K562 (cell line): ENCODE measurements at regions of chr12 and their contacts with region 1.

Region 1: DNA sequence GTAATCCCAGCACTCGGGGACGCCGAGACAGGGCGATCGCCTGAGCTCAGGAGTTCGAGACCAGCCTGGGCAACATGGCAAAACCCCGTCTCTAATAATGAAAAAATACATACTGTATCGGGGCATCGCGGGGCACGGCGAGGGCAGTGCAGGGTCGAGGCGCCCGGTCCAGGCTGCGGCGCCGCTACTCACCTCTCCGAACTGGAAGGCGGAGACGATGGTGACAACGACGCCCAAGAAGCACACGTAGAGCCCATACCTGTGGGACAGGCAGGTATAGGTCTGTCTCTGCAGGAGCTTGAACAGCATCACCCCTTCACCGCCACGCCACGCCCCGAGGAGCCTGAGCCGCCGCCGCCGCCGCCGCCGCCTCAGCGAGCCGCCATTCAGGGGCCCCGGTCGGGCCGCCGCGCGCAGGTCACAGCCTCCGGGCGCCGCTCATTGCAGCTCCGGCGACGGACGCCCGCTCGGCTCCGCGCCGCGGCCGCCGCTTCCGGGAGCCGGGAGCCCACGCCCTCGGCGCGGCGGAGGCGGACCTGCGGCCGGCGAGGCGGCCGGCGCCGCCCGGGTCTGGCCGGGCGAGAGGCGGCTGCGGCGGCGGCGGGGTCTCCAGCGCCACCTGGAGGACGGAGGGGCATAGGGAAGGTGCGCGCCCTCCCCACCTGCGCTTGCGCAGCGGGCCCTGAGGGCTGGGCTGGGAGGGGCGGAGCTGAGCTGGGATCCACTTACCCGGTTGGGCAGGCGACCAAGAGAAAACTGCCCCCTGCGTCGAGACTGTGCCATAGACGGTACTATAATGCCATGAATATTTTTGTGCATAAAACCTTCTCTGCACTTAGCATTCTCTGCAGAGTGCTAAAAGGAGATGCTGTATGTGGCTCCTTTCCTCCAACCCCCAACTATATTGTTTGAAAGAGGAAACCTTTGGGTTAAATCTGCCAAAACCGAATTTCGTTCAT is at the start of gene GNPTAB:
- DNase-seq: peak; percentile 96 to 99 (median 98)
- ATAC-seq: peak; percentile 94
- H3K4me3 ChIP-seq: peak within 1 kb of the TSS; percentile 89
- H3K27ac ChIP-seq: peak within 1 kb of the TSS; percentile 77
- H3K4me1 ChIP-seq: peaks cover 13 to 33% of the 10 kb centered on the region in 2 experiments
- H3K27me3 ChIP-seq: no peaks in the 10 kb centered on the region
- CTCF ChIP-seq: peak; percentile 75 to 88 (median 78)
- EP300 ChIP-seq: peak; percentile 8; the same call in 1 of the 2 replicates
- POLR2A ChIP-seq: no peak
- RAD21 ChIP-seq: peak; percentile 76 to 85
- polyA plus RNA-seq, gene GNPTAB: 5.9 to 6.5 TPM

Region 2: GRCh38 chr12:101570047-101570446 is 260.6 kb before region 1 on chr12:
- CTCF ChIA-PET with region 1: interaction called, 3 read pairs
- POLR2A ChIA-PET with region 1: no interaction called
- in situ Hi-C with region 1: no loop called
- intact Hi-C with region 1: loop called (anchors 10 kb)
- DNase-seq: peak in 1 of 4 experiments; percentile 10
- ATAC-seq: peak; percentile 49
- H3K4me3 ChIP-seq: no peak overlapping the region
- H3K27ac ChIP-seq: no peak overlapping the region
- H3K4me1 ChIP-seq: no peaks in the 10 kb centered on the region
- H3K27me3 ChIP-seq: peaks cover 18 to 21% of the 10 kb centered on the region in 2 experiments
- CTCF ChIP-seq: peak in 2 of 3 experiments; percentile 28 to 43; a peak in 3 of 6 replicates
- EP300 ChIP-seq: no peak
- POLR2A ChIP-seq: no peak
- RAD21 ChIP-seq: peak; percentile 28 to 55; a peak in 3 of 4 replicates

Region 3: GRCh38 chr12:101619846-101620761 is 210.5 kb before region 1 on chr12:
- CTCF ChIA-PET with region 1: no interaction called
- POLR2A ChIA-PET with region 1: no interaction called
- in situ Hi-C with region 1: no loop called
- intact Hi-C with region 1: loop called (anchors 10 kb)
- DNase-seq: no peak
- ATAC-seq: no peak
- H3K4me3 ChIP-seq: no peak overlapping the region
- H3K27ac ChIP-seq: no peak overlapping the region
- H3K4me1 ChIP-seq: peaks cover 0 to 3% of the 10 kb centered on the region in 2 experiments; a peak in 1 of 5 replicates
- H3K27me3 ChIP-seq: no peaks in the 10 kb centered on the region
- CTCF ChIP-seq: no peak
- EP300 ChIP-seq: no peak
- POLR2A ChIP-seq: no peak
- RAD21 ChIP-seq: no peak

Region 4: DNA sequence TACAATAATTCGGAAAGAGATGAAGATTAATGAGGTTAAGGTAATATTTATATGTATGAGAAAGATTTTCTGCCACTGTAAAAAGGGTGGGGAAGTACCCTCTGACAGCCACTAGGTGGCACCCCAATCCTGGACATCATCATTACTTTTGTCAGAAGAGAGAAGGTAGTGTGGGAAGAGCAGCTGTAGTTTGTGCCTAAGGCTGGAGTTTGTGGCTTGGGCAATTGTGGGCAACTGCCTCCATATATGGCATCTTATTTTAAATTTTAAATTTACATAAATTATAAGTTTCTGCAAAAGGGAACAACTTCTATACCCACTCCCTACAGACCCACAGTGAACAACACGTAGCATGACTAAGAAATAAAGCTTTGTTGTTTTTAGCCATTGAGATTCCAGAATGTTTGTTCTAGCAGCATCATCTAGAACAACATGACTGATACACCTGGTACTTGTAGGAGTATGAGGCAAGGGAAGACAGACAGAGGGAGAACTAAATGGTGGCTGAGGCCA is 56.9 kb before region 1 on chr12:
- CTCF ChIA-PET with region 1: interaction called, 23 read pairs
- POLR2A ChIA-PET with region 1: interaction called, 4 read pairs
- in situ Hi-C with region 1: loop called (anchors 5 kb)
- intact Hi-C with region 1: loop called (anchors 1 kb)
- DNase-seq: peak; percentile 64 to 78 (median 70)
- ATAC-seq: peak; percentile 91
- H3K4me3 ChIP-seq: no peak overlapping the region
- H3K27ac ChIP-seq: no peak overlapping the region
- H3K4me1 ChIP-seq: no peaks in the 10 kb centered on the region
- H3K27me3 ChIP-seq: no peaks in the 10 kb centered on the region
- CTCF ChIP-seq: peak; percentile 73 to 94 (median 82)
- EP300 ChIP-seq: 0 out of 2 replicates have a peak, but pooled peaks have one; percentile 21
- POLR2A ChIP-seq: no peak
- RAD21 ChIP-seq: peak; percentile 92 to 93

Region 5: DNA sequence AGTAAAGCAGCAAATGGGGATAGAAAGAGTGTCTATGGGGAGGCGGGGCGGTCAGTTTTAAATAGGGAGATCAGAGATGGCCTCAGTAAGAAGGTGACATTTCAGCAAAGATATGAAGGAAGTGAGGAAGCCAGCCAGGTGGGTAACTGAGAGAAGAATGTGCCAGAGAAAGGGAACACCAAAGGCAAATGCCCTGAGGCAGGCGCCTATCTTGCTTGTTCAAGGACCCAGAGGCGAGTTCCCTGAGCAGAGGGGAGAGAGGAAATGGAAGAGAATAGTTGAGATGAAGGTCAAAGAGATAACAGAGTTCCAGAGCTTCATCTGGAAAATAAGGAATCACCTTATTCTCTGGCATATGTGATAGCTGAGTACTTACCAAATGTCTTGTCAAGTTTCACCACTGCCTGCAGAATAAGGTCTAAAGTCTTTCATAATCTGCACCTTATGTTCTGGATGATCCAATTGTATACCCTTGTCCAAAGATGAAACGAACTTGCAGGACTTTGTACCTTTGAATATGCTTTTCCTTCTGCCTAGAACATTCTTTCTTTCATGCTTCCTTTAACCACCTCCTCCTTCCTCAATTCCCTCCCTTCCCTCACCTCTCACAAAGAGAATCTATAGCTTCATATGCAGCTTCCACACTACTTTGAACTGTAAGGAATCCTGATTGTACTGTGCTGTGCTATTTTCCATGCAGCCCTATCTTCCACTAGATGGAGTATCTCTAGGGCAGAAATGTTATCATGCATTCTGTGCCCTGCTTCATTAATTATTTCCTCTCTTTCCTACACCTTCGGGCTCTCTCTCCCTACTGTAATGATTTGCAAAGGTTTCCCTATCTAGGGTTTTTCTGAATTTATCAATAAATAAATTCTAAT is 38.4 kb before region 1 on chr12:
- CTCF ChIA-PET with region 1: interaction called, 5 read pairs
- POLR2A ChIA-PET with region 1: no interaction called
- in situ Hi-C with region 1: no loop called
- intact Hi-C with region 1: loop called (anchors 2 kb)
- DNase-seq: no peak
- ATAC-seq: peak; percentile 55; the same call in 2 of the 3 replicates
- H3K4me3 ChIP-seq: no peak overlapping the region
- H3K27ac ChIP-seq: no peak overlapping the region; the same call in 2 of the 3 replicates
- H3K4me1 ChIP-seq: peaks cover 0 to 21% of the 10 kb centered on the region in 2 experiments; a peak in 3 of 5 replicates
- H3K27me3 ChIP-seq: no peaks in the 10 kb centered on the region
- CTCF ChIP-seq: peak in 2 of 3 experiments; percentile 19 to 43; a peak in 2 of 6 replicates
- EP300 ChIP-seq: no peak
- POLR2A ChIP-seq: no peak
- RAD21 ChIP-seq: peak in 1 of 2 experiments; percentile 48; a peak in 3 of 4 replicates

Region 6: GRCh38 chr12:101813117-101813516 is 17.5 kb before region 1 on chr12:
- CTCF ChIA-PET with region 1: no interaction called
- POLR2A ChIA-PET with region 1: interaction called, 41 read pairs
- in situ Hi-C with region 1: no loop called
- intact Hi-C with region 1: no loop called
- DNase-seq: no peak
- ATAC-seq: no peak
- H3K4me3 ChIP-seq: no peak overlapping the region
- H3K27ac ChIP-seq: no peak overlapping the region
- H3K4me1 ChIP-seq: no peaks in the 10 kb centered on the region
- H3K27me3 ChIP-seq: no peaks in the 10 kb centered on the region
- CTCF ChIP-seq: no peak
- EP300 ChIP-seq: no peak
- POLR2A ChIP-seq: no peak
- RAD21 ChIP-seq: no peak

Region 7: GRCh38 chr12:101923045-101923718 is 92.5 kb after region 1 on chr12:
- CTCF ChIA-PET with region 1: no interaction called
- POLR2A ChIA-PET with region 1: no interaction called
- in situ Hi-C with region 1: no loop called
- intact Hi-C with region 1: no loop called
- DNase-seq: no peak
- ATAC-seq: no peak
- H3K4me3 ChIP-seq: no peak overlapping the region
- H3K27ac ChIP-seq: no peak overlapping the region
- H3K4me1 ChIP-seq: no peaks in the 10 kb centered on the region; a peak in 2 of 5 replicates
- H3K27me3 ChIP-seq: peaks cover 0 to 4% of the 10 kb centered on the region in 2 experiments; a peak in 2 of 5 replicates
- CTCF ChIP-seq: no peak
- EP300 ChIP-seq: no peak
- POLR2A ChIP-seq: no peak
- RAD21 ChIP-seq: no peak